ENCODE measurements at regions of chr1 and their contacts with region 1.

Region 1: DNA sequence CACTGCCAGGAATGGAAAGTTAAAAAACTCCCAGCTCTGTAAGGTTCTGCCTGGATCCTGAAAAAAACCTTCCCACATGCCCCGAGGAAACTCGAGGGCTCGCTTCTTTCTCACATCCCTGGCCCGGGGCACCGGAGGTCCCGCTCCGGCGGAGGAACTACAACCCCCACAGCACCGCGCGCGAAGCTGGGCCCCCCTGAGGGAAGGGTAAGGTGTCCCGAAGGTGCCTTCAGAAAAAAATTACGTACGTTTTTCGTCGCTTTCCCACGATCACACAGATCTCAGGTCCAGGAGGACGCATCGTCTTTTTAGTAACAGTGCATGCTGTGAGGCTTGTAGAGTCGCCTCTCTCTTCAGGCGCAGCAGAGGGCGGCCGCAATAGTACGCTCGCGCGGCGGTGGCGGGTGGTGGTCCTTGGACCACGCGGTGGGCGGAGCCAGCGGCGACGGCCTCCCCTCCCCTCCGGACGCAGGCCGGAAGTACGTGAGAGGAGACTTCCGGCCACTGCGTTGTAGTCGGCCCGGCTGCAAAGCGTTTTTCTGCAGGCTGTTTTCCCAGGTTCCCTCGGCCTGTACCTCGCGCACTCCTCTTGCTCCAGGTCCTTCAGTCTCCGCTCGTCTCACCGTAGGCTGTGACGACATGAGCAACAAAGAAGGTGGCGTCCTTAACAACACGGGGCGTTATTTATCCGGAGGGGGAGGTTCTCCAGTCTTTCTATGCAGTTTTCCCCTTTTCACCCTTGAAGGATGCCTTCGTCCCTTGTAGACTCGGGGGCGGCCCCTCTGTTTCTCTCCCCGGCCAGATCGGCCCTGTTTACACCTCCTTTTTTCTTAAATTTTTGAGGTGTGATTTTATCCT is at the start of gene TSNAX:
- DNase-seq: peak; percentile 88
- H3K4me3 Mint-ChIP-seq: peak within 1 kb of the TSS; percentile 93
- H3K27ac Mint-ChIP-seq: peak within 1 kb of the TSS; percentile 98
- H3K4me1 Mint-ChIP-seq: peaks cover 38% of the 10 kb centered on the region
- H3K27me3 Mint-ChIP-seq: no peaks in the 10 kb centered on the region
- total RNA-seq, gene TSNAX: 42.7 and 47.1 TPM in 2 replicates

Region 2: GRCh38 chr1:231272880-231273279 is 255.5 kb before region 1 on chr1:
- intact Hi-C with region 1: loop called (anchors 1 kb)
- DNase-seq: peak; percentile 27
- H3K4me3 Mint-ChIP-seq: peak overlapping the region; percentile 83
- H3K27ac Mint-ChIP-seq: peak overlapping the region; percentile 100
- H3K4me1 Mint-ChIP-seq: peaks cover 39% of the 10 kb centered on the region
- H3K27me3 Mint-ChIP-seq: no peaks in the 10 kb centered on the region

Region 3: GRCh38 chr1:231357831-231358354 is 170.5 kb before region 1 on chr1:
- intact Hi-C with region 1: loop called (anchors 1 kb)
- DNase-seq: no peak
- H3K4me3 Mint-ChIP-seq: no peak overlapping the region
- H3K27ac Mint-ChIP-seq: no peak overlapping the region
- H3K4me1 Mint-ChIP-seq: peaks cover 13% of the 10 kb centered on the region
- H3K27me3 Mint-ChIP-seq: no peaks in the 10 kb centered on the region

Region 4: DNA sequence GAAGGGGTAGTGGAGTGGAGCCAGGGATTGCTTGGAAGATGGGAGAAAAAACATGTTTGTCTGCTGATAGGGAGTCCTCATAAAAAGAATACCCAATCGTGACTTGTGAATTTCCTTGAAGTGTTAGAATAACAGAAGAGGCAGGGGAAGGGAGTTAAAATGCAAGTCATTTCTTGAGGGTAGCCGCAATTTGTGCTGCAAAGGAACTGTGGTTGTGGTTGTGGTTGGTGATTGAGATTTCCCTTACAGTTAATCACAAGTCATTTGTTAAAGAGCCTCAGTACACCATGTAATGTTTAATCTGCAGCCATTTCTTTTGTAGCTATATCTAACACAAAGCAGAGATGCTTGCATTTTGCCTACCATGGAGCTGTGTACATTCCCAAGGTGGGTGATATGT is 67.8 kb before region 1 on chr1:
- intact Hi-C with region 1: loop called (anchors 1 kb)
- DNase-seq: peak; percentile 72
- H3K4me3 Mint-ChIP-seq: no peak overlapping the region
- H3K27ac Mint-ChIP-seq: peak overlapping the region; percentile 32
- H3K4me1 Mint-ChIP-seq: peaks cover 45% of the 10 kb centered on the region
- H3K27me3 Mint-ChIP-seq: peaks cover 64% of the 10 kb centered on the region

Region 5: DNA sequence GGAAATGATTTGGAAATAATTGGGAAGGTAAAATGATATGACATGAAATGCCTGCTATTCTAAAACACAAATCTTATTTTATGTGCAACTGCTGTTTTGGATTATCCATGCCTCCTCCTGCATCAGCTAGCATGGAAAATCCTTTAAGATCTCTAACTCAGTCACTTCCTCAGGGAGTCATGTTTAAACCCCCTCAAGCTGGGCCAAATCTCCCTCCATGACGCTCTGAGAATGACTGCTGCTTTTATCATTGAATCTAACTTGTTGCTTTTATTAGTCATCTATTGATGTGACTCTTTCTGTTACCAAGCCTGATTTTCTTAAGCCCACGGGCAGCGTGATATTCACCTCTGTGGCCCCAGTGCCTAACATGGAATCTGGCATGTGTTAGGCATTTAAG is 423.0 kb after region 1 on chr1:
- intact Hi-C with region 1: no loop called
- DNase-seq: no peak
- H3K4me3 Mint-ChIP-seq: no peak overlapping the region
- H3K27ac Mint-ChIP-seq: no peak overlapping the region
- H3K4me1 Mint-ChIP-seq: no peaks in the 10 kb centered on the region
- H3K27me3 Mint-ChIP-seq: no peaks in the 10 kb centered on the region